ENCODE measurements at regions of chr5 and their contacts with region 1.

Region 1: DNA sequence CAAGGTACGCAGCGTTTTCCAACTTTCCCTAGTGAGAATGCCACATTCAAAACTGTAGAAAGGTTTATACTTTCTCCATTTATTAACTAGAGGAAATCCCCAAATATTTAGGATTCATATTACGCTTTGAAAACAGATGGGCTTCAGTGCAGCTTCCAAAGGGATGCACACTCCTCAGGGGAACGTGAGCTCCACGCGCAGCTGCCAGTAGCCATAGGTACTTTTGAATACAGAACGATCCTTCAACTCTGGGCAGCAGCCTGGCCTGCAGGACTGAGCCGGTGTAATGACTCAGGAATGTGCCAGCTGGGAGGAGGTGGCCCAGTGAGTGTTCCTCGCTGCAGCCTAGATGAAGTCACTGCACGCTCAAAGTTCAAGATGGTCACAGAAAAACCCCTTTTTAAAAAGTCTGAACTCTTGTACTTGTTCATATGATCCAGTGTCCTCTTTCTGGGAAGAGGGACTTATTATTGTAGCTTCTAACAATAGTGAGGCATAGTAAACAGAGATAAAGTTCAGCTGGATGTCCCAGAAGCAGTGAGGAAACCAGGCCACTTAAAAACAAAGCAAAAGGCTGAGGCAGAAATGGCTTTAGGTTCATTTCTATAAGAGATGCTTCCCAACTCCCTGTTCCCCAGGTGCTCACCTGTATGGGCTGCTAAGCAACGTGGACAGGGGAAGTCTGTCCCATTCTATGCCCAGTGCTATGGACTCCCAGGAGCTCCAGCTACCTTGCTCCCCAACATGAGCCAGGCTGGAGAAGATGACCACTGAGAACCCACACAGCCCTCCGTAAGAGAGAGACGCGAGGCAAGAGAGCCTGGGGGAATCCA is 130.0 kb downstream of the LHFPL2 start:
- DNase-seq: peak; percentile 97
- ATAC-seq: peak; percentile 99
- H3K4me3 ChIP-seq: peak overlapping the region in 1 of 3 experiments; percentile 41; a peak in 2 of 6 replicates
- H3K27ac ChIP-seq: peak overlapping the region; percentile 89
- H3K4me1 ChIP-seq: peaks cover 59% of the 10 kb centered on the region
- H3K27me3 ChIP-seq: no peaks in the 10 kb centered on the region
- CTCF ChIP-seq: no peak
- EP300 ChIP-seq: peak; percentile 57 to 82; a peak in 2 of 4 replicates
- POLR2A ChIP-seq: peak; percentile 41 to 69; a peak in 3 of 4 replicates
- RAD21 ChIP-seq: no peak; the same call in 1 of the 2 replicates

Region 2: DNA sequence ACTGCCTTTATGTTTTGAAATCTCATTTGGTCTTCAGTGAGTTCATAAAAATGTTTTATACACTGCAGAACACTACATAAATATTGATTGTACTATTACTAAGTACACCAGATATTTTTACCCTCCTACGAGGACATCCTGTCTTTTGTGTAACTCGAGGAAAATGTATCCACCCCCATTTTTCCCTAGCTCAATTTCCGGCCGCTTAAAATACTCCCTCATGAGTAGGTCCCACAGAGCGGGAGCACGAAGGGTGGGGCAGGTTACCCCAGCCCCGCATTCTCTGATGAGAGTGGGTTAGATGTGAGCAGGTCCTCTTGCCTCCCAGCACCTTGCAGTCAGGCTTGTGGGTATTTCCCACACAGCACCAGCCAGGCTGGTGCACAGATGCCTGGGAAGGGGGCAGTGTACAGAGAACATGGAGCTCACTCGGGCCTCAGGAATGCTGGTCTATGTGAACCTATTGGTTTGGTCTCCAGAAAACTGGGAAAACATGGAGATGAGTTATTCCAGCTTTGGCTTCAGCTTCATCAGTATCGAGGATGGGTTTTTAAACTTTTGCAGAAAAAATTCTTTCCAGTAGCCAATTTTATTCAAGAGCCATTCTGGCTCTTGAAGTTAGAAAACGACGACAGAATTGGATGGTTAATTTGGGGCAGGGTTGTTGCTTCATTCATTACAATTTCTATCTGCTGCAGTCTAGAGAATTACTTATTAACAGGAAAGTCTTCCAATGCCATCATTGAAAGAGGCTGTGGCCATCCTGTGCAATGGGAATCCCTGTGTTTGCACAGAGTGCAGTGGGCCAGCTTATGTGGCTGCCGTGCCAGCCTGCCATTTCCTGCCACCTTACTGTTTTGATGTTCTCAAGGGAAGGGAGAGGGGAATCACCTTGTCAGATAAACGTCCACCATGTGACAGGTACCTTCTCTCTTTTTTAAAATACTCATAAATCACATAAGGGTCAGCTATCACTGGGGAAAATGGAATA is 1099.7 kb before region 1 on chr5:
- CTCF ChIA-PET with region 1: no interaction called
- POLR2A ChIA-PET with region 1: no interaction called
- in situ Hi-C with region 1: no loop called
- intact Hi-C with region 1: no loop called
- DNase-seq: no peak
- ATAC-seq: peak; percentile 63
- H3K4me3 ChIP-seq: no peak overlapping the region
- H3K27ac ChIP-seq: no peak overlapping the region
- H3K4me1 ChIP-seq: peaks cover 15% of the 10 kb centered on the region; the same call in 1 of the 2 replicates
- H3K27me3 ChIP-seq: no peaks in the 10 kb centered on the region
- CTCF ChIP-seq: no peak
- EP300 ChIP-seq: no peak
- POLR2A ChIP-seq: no peak
- RAD21 ChIP-seq: no peak

Region 3: GRCh38 chr5:78483809-78484521 is 34.6 kb before region 1 on chr5:
- CTCF ChIA-PET with region 1: no interaction called
- POLR2A ChIA-PET with region 1: interaction called, 4 read pairs
- in situ Hi-C with region 1: no loop called
- intact Hi-C with region 1: loop called (anchors 5 kb)
- DNase-seq: no peak
- ATAC-seq: no peak
- H3K4me3 ChIP-seq: no peak overlapping the region
- H3K27ac ChIP-seq: no peak overlapping the region
- H3K4me1 ChIP-seq: no peaks in the 10 kb centered on the region
- H3K27me3 ChIP-seq: no peaks in the 10 kb centered on the region
- CTCF ChIP-seq: no peak
- EP300 ChIP-seq: no peak
- POLR2A ChIP-seq: no peak
- RAD21 ChIP-seq: no peak

Region 4: GRCh38 chr5:78492650-78493049 is 25.9 kb before region 1 on chr5:
- CTCF ChIA-PET with region 1: no interaction called
- POLR2A ChIA-PET with region 1: no interaction called
- in situ Hi-C with region 1: no loop called
- intact Hi-C with region 1: loop called (anchors 1 kb)
- DNase-seq: no peak
- ATAC-seq: no peak
- H3K4me3 ChIP-seq: no peak overlapping the region
- H3K27ac ChIP-seq: no peak overlapping the region
- H3K4me1 ChIP-seq: no peaks in the 10 kb centered on the region
- H3K27me3 ChIP-seq: no peaks in the 10 kb centered on the region
- CTCF ChIP-seq: no peak
- EP300 ChIP-seq: no peak
- POLR2A ChIP-seq: no peak
- RAD21 ChIP-seq: no peak

Region 5: GRCh38 chr5:78661691-78662090 is 143.1 kb after region 1 on chr5:
- CTCF ChIA-PET with region 1: no interaction called
- POLR2A ChIA-PET with region 1: no interaction called
- in situ Hi-C with region 1: no loop called
- intact Hi-C with region 1: no loop called
- DNase-seq: no peak
- ATAC-seq: no peak
- H3K4me3 ChIP-seq: no peak overlapping the region
- H3K27ac ChIP-seq: no peak overlapping the region
- H3K4me1 ChIP-seq: peaks cover 26% of the 10 kb centered on the region
- H3K27me3 ChIP-seq: no peaks in the 10 kb centered on the region
- CTCF ChIP-seq: no peak
- EP300 ChIP-seq: no peak
- POLR2A ChIP-seq: no peak
- RAD21 ChIP-seq: no peak

Region 6: DNA sequence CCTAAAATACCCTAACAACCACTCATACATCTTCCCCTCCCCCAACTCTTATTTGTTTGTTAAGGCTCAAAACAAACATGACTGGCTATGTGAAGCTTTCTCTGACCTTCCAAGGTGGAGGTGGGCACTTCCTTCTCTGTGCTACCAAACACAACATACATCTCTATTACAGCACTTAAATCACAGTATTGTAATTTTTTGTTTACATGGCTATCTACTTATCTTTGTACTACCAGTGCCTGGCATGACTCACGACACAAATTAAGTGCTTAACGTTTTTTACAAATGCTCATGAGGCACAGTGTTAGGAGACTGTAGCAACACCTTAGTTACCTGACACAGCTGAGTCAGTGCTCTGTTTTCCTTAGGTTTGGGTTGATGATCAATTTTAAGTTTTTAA is 976.7 kb after region 1 on chr5:
- CTCF ChIA-PET with region 1: no interaction called
- POLR2A ChIA-PET with region 1: no interaction called
- in situ Hi-C with region 1: no loop called
- intact Hi-C with region 1: no loop called
- DNase-seq: peak; percentile 36
- ATAC-seq: peak; percentile 42; the same call in 2 of the 3 replicates
- H3K4me3 ChIP-seq: no peak overlapping the region
- H3K27ac ChIP-seq: no peak overlapping the region
- H3K4me1 ChIP-seq: peaks cover 13% of the 10 kb centered on the region
- H3K27me3 ChIP-seq: no peaks in the 10 kb centered on the region
- CTCF ChIP-seq: no peak
- EP300 ChIP-seq: no peak
- POLR2A ChIP-seq: no peak
- RAD21 ChIP-seq: no peak

Measured in HepG2 (cell line).